OCI-LY7 (cell line): ENCODE measurements at regions of chr3 and their contacts with region 1.

Region 1: DNA sequence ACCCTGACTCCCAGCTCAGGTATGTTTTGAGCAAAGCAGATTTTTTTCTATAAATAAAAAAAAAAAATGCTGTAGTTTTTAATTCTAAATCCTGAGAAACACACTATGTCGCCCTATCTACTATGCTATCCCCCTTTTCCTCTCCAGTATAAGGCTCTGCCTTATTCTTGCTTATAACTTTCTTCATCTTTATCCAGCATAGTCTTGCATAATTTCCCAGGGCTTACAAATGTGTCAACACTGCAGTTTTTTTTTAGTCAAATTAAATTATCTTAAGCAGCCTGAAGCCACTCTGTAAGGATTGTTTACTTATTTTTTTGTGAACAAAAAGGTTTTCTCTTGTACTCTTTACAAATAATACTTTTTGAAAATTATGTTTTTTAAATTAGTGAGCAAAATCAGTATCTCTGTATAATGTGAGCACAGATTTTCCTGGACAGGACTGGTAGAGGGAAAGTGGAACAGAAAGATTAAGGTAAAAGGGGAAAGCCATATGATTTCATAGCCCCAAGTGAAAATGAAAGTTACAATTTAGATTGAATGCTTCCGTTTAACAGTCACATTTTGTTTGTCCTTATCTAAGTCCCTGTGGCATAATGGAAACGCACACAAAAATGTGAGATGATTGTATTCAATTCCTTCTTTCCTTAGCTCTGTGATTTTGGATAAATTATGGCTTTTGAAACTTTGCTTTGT is 5.6 kb upstream of the PYDC2 start:
- DNase-seq: no peak
- H3K4me3 ChIP-seq: no peak overlapping the region
- H3K27ac ChIP-seq: no peak overlapping the region
- H3K4me1 ChIP-seq: no peaks in the 10 kb centered on the region
- CTCF ChIP-seq: no peak

Region 2: GRCh38 chr3:191444569-191444968 is 10.8 kb before region 1 on chr3:
- CTCF ChIA-PET with region 1: no interaction called
- POLR2A ChIA-PET with region 1: interaction called, 12 read pairs
- intact Hi-C with region 1: no loop called
- DNase-seq: no peak
- H3K4me3 ChIP-seq: no peak overlapping the region
- H3K27ac ChIP-seq: no peak overlapping the region
- H3K4me1 ChIP-seq: no peaks in the 10 kb centered on the region
- CTCF ChIP-seq: no peak

Region 3: DNA sequence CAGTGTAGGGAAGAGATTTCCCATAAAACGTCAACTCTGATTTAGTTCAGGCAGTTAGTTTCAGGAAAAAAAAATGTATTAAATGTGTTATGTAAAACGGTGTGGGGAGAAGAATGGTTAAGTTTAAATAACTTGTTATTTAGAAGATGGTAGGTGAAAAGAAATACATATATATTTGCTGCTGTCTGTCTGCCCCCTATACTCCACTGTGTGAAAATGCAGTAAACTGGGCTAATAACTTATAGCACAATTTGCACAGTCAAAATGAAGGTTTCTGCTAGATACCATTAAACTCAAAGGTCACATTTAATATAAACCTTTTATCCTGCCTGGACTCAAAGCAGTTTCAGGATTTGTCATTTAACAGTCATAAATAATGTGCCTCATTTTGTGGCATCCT is 756.9 kb after region 1 on chr3:
- CTCF ChIA-PET with region 1: no interaction called
- POLR2A ChIA-PET with region 1: no interaction called
- intact Hi-C with region 1: no loop called
- DNase-seq: peak; percentile 44
- H3K4me3 ChIP-seq: no peak overlapping the region
- H3K27ac ChIP-seq: no peak overlapping the region
- H3K4me1 ChIP-seq: no peaks in the 10 kb centered on the region
- CTCF ChIP-seq: peak; percentile 77